ENCODE measurements at regions of chr16 and their contacts with region 1.

Region 1: GRCh38 chr16:87778830-87779579 is 13.2 kb upstream of the KLHDC4 start:
- DNase-seq: peak; percentile 97
- ATAC-seq: peak; percentile 79
- H3K4me3 Mint-ChIP-seq: peak overlapping the region; percentile 70
- H3K27ac Mint-ChIP-seq: peak overlapping the region; percentile 98
- H3K4me1 Mint-ChIP-seq: peaks cover 62% of the 10 kb centered on the region
- H3K27me3 Mint-ChIP-seq: peaks cover 2% of the 10 kb centered on the region

Region 2: DNA sequence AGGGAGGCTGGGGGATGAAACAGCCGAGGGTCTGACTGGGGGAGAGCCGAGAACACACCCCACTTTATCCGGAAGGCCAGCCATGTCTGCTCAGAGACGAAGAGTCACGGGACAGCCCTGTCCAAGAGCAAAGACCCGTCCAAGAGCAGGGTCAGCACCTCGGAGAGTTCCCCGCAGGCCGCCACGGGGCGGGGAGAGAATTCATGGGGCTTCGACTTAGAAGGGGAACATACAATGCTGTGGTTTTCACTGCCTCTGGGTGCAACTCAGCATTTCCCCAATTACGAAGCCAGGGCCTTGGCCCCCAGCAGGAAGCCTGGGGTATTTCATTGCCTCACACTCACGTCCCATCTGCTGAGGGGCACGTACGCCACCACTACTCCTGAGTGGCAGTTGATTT is 117.4 kb before region 1 on chr16:
- CTCF ChIA-PET with region 1: no interaction called
- DNase-seq: peak; percentile 64
- ATAC-seq: peak; percentile 58
- H3K4me3 Mint-ChIP-seq: no peak overlapping the region
- H3K27ac Mint-ChIP-seq: no peak overlapping the region
- H3K4me1 Mint-ChIP-seq: no peaks in the 10 kb centered on the region
- H3K27me3 Mint-ChIP-seq: peaks cover 10% of the 10 kb centered on the region

Region 3: GRCh38 chr16:87765776-87766484 is 13.1 kb before region 1 on chr16 and contains the start of gene KLHDC4:
- CTCF ChIA-PET with region 1: interaction called, 41 read pairs
- DNase-seq: peak; percentile 94
- ATAC-seq: peak; percentile 83
- H3K4me3 Mint-ChIP-seq: peak within 1 kb of the TSS; percentile 100
- H3K27ac Mint-ChIP-seq: peak within 1 kb of the TSS; percentile 100
- H3K4me1 Mint-ChIP-seq: peaks cover 46% of the 10 kb centered on the region
- H3K27me3 Mint-ChIP-seq: no peaks in the 10 kb centered on the region
- total RNA-seq, gene KLHDC4: 86.0 to 114 TPM

Region 4: DNA sequence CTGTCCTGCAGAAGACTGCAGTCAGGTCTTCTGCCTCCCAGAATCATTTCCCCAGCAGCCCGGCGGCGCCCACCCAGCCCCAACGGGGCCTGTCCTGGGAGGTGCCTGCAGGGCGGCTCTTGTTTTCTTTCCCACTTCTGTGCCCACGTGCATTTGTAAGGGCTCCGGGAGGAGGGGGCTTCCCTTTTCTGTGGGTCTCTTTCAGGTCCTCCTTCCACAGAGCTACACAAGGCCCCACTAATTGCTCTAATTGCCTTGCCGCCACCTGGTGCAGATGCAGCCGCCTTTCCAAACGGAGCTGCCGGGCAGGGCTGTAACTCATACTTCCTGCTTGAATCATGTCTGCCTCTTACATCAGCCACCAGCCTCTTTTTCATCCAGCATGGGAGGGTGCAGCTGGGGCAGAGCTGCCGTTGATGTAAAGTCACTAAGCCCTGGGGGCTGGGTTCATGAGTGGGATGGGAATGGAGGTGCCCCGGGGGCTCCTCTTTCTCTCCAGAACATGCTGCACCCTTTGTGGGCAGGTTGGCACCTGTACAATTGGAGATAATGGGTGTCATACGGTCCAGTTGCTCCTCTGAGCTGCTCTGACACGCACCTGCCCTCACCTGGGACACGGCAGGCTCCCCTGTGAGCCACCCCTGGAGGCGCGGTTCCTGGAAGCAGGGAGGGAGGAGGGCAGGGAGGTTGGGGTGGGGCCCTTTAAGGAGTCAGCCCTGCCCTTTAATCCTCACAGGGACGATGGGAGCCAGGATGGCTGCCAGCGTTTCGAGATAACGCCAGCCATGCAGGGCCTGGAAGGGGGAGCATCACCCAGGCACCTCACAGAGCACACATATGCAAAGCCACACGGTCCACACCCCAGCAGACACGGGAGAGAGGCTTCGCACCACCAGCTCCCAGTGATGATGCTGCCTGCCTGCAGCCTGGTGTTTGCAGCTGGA is 27.9 kb after region 1 on chr16:
- CTCF ChIA-PET with region 1: interaction called, 41 read pairs
- DNase-seq: peak; percentile 71
- ATAC-seq: peak; percentile 81
- H3K4me3 Mint-ChIP-seq: peak overlapping the region; percentile 72
- H3K27ac Mint-ChIP-seq: peak overlapping the region; percentile 91
- H3K4me1 Mint-ChIP-seq: peaks cover 36% of the 10 kb centered on the region
- H3K27me3 Mint-ChIP-seq: peaks cover 5% of the 10 kb centered on the region

Region 5: DNA sequence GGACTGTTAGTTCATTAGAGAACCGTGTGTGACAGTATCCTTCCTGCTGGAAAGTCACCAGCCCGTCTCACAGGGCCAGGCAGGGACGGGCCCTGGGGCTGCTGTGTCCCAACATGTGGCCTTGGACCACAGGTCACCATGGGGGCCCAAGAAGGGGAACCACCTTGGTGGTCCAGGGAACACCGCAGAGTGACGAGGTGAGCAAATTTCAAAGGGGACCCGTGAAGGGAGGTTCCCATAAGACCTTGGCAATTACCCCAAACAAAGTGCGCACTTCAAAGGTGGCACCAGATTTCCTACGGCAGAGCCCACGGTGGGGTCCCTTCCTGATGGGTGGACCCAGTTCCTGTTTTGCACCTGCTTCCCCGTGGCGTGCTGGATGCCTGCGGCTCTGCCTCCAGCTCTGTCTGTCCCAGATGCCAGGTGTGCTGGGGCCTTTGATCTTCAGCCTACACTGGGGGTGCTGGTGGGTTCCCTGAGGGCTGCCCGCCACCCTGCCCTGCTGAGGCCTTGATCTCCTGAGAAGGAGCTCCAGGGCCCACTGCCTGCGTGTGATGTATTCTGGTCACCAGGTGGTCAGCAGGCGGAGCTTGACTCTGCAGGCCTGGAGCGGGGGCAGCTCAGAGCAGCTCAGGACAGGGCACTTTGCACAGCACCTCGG is 63.3 kb after region 1 on chr16:
- CTCF ChIA-PET with region 1: interaction called, 113 read pairs
- DNase-seq: no peak
- ATAC-seq: no peak
- H3K4me3 Mint-ChIP-seq: no peak overlapping the region
- H3K27ac Mint-ChIP-seq: no peak overlapping the region
- H3K4me1 Mint-ChIP-seq: peaks cover 4% of the 10 kb centered on the region
- H3K27me3 Mint-ChIP-seq: no peaks in the 10 kb centered on the region

Region 6: GRCh38 chr16:87877938-87878507 is 99.0 kb after region 1 on chr16:
- CTCF ChIA-PET with region 1: interaction called, 451 read pairs
- DNase-seq: peak; percentile 68
- ATAC-seq: no peak
- H3K4me3 Mint-ChIP-seq: no peak overlapping the region
- H3K27ac Mint-ChIP-seq: no peak overlapping the region
- H3K4me1 Mint-ChIP-seq: peaks cover 28% of the 10 kb centered on the region
- H3K27me3 Mint-ChIP-seq: peaks cover 8% of the 10 kb centered on the region

Region 7: GRCh38 chr16:87914812-87915211 is 135.8 kb after region 1 on chr16:
- CTCF ChIA-PET with region 1: interaction called, 54 read pairs
- DNase-seq: no peak
- ATAC-seq: no peak
- H3K4me3 Mint-ChIP-seq: no peak overlapping the region
- H3K27ac Mint-ChIP-seq: no peak overlapping the region
- H3K4me1 Mint-ChIP-seq: peaks cover 4% of the 10 kb centered on the region
- H3K27me3 Mint-ChIP-seq: peaks cover 20% of the 10 kb centered on the region

Measured in activated CD8-positive, alpha-beta memory T cell treated with anti-CD3 and anti-CD28 coated beads, Interleukin-2, amount 10 ng/mL, durations not matched to agents 7 days and 5 days (primary cell).